ENCODE measurements at regions of chr12 and their contacts with region 1.

Region 1: GRCh38 chr12:22624870-22625761 is at the start of gene ETNK1:
- DNase-seq: peak; percentile 72 to 88 (median 77)
- ATAC-seq: peak; percentile 99
- H3K4me3 ChIP-seq: peak within 1 kb of the TSS; percentile 80
- H3K4me3 Mint-ChIP-seq: peak within 1 kb of the TSS; percentile 85 to 100 (median 96)
- H3K27ac ChIP-seq: peak within 1 kb of the TSS; percentile 88
- H3K27ac Mint-ChIP-seq: peak within 1 kb of the TSS; percentile 84 to 99 (median 97)
- H3K4me1 ChIP-seq: peaks cover 17 to 20% of the 10 kb centered on the region in 2 donors
- H3K4me1 Mint-ChIP-seq: peaks cover 23 to 50% (median 45%) of the 10 kb centered on the region in 7 donors
- H3K27me3 ChIP-seq: no peaks in the 10 kb centered on the region
- H3K27me3 Mint-ChIP-seq: peaks cover 0 to 25% (median 9%) of the 10 kb centered on the region in 5 donors
- total RNA-seq, gene ETNK1: 43.7 to 88.6 (median 77.9) TPM

Region 2: GRCh38 chr12:21438643-21439042 is 1186.5 kb before region 1 on chr12:
- CTCF ChIA-PET with region 1: no interaction called
- POLR2A ChIA-PET with region 1: no interaction called
- intact Hi-C with region 1: loop called in 1 of 2 experiments (anchors 1 kb)
- DNase-seq: no peak
- ATAC-seq: no peak
- H3K4me3 ChIP-seq: peak overlapping the region; percentile 91
- H3K4me3 Mint-ChIP-seq: peak overlapping the region; percentile 94 to 99 (median 98)
- H3K27ac ChIP-seq: peak overlapping the region; percentile 81
- H3K27ac Mint-ChIP-seq: peak overlapping the region; percentile 92 to 99 (median 97)
- H3K4me1 ChIP-seq: peaks cover 11 to 22% of the 10 kb centered on the region in 2 donors
- H3K4me1 Mint-ChIP-seq: peaks cover 32 to 72% (median 49%) of the 10 kb centered on the region in 7 donors
- H3K27me3 ChIP-seq: no peaks in the 10 kb centered on the region
- H3K27me3 Mint-ChIP-seq: peaks cover 0 to 10% (median 0%) of the 10 kb centered on the region in 5 donors

Region 3: DNA sequence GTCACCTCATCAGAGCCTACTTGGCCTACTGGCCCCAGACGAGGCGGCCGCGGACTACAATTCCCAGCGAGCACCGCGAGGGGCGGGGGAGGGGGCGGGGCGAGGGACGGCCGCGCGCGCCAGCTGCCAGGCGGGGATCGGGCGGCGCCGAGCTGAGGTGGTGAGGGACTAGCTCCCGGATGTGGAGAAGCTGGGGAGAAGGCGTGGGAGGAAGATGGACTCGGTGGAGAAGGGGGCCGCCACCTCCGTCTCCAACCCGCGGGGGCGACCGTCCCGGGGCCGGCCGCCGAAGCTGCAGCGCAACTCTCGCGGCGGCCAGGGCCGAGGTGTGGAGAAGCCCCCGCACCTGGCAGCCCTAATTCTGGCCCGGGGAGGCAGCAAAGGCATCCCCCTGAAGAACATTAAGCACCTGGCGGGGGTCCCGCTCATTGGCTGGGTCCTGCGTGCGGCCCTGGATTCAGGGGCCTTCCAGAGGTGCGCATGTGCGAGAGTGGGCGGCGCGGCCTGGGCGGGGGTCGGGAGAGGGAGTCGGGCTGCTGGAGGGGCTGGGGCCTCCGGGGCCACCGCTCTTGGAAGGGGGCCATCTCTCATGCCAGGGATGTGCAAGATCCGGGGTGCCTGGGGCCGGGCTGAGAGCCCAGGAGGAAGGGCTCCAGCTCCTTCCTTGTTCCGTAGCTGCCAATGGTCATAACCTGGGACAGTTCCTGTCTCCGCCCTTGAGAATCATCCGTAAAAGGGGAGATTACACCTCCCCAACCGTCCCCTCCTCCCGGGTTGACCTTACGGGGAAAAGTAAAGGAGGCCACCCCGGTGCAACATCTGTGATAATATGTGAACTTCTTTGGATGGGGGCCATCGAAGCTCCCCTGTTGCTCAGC is 578.8 kb before region 1 on chr12 and contains the start of gene CMAS:
- CTCF ChIA-PET with region 1: no interaction called
- POLR2A ChIA-PET with region 1: interaction called, 4 read pairs
- intact Hi-C with region 1: loop called (anchors 1 to 5 kb)
- DNase-seq: peak; percentile 49 to 76 (median 65)
- ATAC-seq: peak; percentile 93
- H3K4me3 ChIP-seq: peak within 1 kb of the TSS; percentile 82
- H3K4me3 Mint-ChIP-seq: peak within 1 kb of the TSS; percentile 80 to 99 (median 94)
- H3K27ac ChIP-seq: peak within 1 kb of the TSS; percentile 82
- H3K27ac Mint-ChIP-seq: peak within 1 kb of the TSS; percentile 35 to 95 (median 89)
- H3K4me1 ChIP-seq: peaks cover 10 to 15% of the 10 kb centered on the region in 2 donors
- H3K4me1 Mint-ChIP-seq: peaks cover 27 to 65% (median 48%) of the 10 kb centered on the region in 7 donors
- H3K27me3 ChIP-seq: no peaks in the 10 kb centered on the region
- H3K27me3 Mint-ChIP-seq: no peaks in the 10 kb centered on the region
- total RNA-seq, gene CMAS: 10.1 to 33.6 (median 19.4) TPM

Region 4: GRCh38 chr12:22164139-22164538 is 461.0 kb before region 1 on chr12:
- CTCF ChIA-PET with region 1: no interaction called
- POLR2A ChIA-PET with region 1: no interaction called
- intact Hi-C with region 1: loop called in 1 of 2 experiments (anchors 10 kb)
- DNase-seq: peak in 6 of 9 donors; percentile 20 to 43 (median 34)
- ATAC-seq: peak; percentile 75
- H3K4me3 ChIP-seq: peak overlapping the region; percentile 17
- H3K4me3 Mint-ChIP-seq: peak overlapping the region; percentile 20 to 77 (median 60)
- H3K27ac ChIP-seq: peak overlapping the region; percentile 23
- H3K27ac Mint-ChIP-seq: peak overlapping the region; percentile 21 to 86 (median 68)
- H3K4me1 ChIP-seq: peaks cover 22 to 38% of the 10 kb centered on the region in 2 donors
- H3K4me1 Mint-ChIP-seq: peaks cover 21 to 63% (median 60%) of the 10 kb centered on the region in 7 donors
- H3K27me3 ChIP-seq: no peaks in the 10 kb centered on the region
- H3K27me3 Mint-ChIP-seq: no peaks in the 10 kb centered on the region

Region 5: GRCh38 chr12:22529281-22530060 is 95.6 kb before region 1 on chr12:
- CTCF ChIA-PET with region 1: interaction called, 14 read pairs
- POLR2A ChIA-PET with region 1: interaction called, 3 read pairs
- intact Hi-C with region 1: no loop called
- DNase-seq: peak in 6 of 9 donors; percentile 26 to 62 (median 51)
- ATAC-seq: peak; percentile 92
- H3K4me3 ChIP-seq: no peak overlapping the region
- H3K4me3 Mint-ChIP-seq: no peak overlapping the region
- H3K27ac ChIP-seq: no peak overlapping the region
- H3K27ac Mint-ChIP-seq: no peak overlapping the region
- H3K4me1 ChIP-seq: no peaks in the 10 kb centered on the region
- H3K4me1 Mint-ChIP-seq: peaks cover 7 to 17% (median 10%) of the 10 kb centered on the region in 7 donors
- H3K27me3 ChIP-seq: no peaks in the 10 kb centered on the region
- H3K27me3 Mint-ChIP-seq: no peaks in the 10 kb centered on the region

Region 6: DNA sequence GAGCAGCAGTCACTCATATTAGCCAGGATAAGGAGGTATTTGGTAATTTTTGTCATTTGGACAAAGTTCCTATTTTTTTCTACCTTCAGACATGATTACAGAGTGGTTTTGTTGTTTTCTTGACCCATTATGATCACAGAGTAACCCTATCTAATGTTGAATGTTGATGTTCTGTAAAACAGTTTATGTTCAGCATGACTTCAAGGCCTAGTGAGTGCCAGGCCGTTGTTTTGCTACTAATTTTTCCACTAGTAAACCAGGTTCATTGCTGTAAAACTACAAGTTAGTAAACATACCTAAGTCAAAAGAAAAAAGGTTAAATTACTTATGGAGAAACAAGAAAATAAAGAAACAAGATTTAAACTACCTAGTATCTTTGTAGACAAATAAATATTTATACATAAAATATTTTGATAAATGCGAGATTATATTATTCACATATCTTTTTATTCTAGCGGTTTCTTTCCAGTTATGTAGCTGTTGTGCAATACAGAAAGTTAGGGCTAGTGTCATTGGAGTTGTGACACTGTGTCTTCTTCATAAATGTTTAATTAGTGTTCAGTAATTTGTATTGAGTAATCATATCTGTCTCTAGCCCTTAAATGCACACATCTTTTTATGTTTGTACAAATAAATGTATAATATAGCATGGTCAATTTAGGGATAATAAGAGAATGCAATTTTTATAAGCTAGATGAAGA is 16.4 kb after region 1 on chr12:
- CTCF ChIA-PET with region 1: interaction called, 3 read pairs
- POLR2A ChIA-PET with region 1: interaction called, 4 read pairs
- intact Hi-C with region 1: loop called in 1 of 2 experiments (anchors 2 kb)
- DNase-seq: no peak
- ATAC-seq: no peak
- H3K4me3 ChIP-seq: no peak overlapping the region
- H3K4me3 Mint-ChIP-seq: peak overlapping the region in 3 of 10 donors; percentile 7 to 33 (median 16)
- H3K27ac ChIP-seq: no peak overlapping the region
- H3K27ac Mint-ChIP-seq: no peak overlapping the region
- H3K4me1 ChIP-seq: no peaks in the 10 kb centered on the region
- H3K4me1 Mint-ChIP-seq: peaks cover 14 to 66% (median 59%) of the 10 kb centered on the region in 7 donors
- H3K27me3 ChIP-seq: no peaks in the 10 kb centered on the region
- H3K27me3 Mint-ChIP-seq: no peaks in the 10 kb centered on the region